Naive thymus-derived CD8-positive, alpha-beta T cell (primary cell): ENCODE measurements at regions of chr11 and their contacts with region 1.

Region 1: GRCh38 chr11:22625448-22626287 is at the start of gene FANCF:
- DNase-seq: peak; percentile 73 to 98 (median 96)
- ATAC-seq: peak; percentile 92 to 94
- H3K4me3 Mint-ChIP-seq: peak within 1 kb of the TSS; percentile 95 to 99 (median 99)
- H3K27ac Mint-ChIP-seq: peak within 1 kb of the TSS; percentile 92 to 100 (median 99)
- H3K4me1 Mint-ChIP-seq: peaks cover 17 to 50% (median 37%) of the 10 kb centered on the region in 4 donors
- H3K27me3 Mint-ChIP-seq: no peaks in the 10 kb centered on the region
- polyA plus RNA-seq, gene FANCF: 16.9 to 19.7 (median 17.0) TPM

Region 2: GRCh38 chr11:22657101-22657694 is 31.5 kb after region 1 on chr11:
- POLR2A ChIA-PET with region 1: interaction called, 10 read pairs
- DNase-seq: peak in 4 of 10 donors; percentile 31 to 60 (median 50)
- ATAC-seq: peak; percentile 62 to 97
- H3K4me3 Mint-ChIP-seq: peak overlapping the region in 9 of 10 donors; percentile 1 to 67 (median 23)
- H3K27ac Mint-ChIP-seq: peak overlapping the region; percentile 21 to 83 (median 68)
- H3K4me1 Mint-ChIP-seq: peaks cover 16 to 20% (median 18%) of the 10 kb centered on the region in 4 donors
- H3K27me3 Mint-ChIP-seq: peaks cover 0 to 4% (median 0%) of the 10 kb centered on the region in 5 donors

Region 3: GRCh38 chr11:22763166-22763565 is 137.5 kb after region 1 on chr11:
- POLR2A ChIA-PET with region 1: no interaction called
- DNase-seq: no peak
- ATAC-seq: no peak
- H3K4me3 Mint-ChIP-seq: no peak overlapping the region
- H3K27ac Mint-ChIP-seq: no peak overlapping the region
- H3K4me1 Mint-ChIP-seq: no peaks in the 10 kb centered on the region
- H3K27me3 Mint-ChIP-seq: no peaks in the 10 kb centered on the region

Region 4: DNA sequence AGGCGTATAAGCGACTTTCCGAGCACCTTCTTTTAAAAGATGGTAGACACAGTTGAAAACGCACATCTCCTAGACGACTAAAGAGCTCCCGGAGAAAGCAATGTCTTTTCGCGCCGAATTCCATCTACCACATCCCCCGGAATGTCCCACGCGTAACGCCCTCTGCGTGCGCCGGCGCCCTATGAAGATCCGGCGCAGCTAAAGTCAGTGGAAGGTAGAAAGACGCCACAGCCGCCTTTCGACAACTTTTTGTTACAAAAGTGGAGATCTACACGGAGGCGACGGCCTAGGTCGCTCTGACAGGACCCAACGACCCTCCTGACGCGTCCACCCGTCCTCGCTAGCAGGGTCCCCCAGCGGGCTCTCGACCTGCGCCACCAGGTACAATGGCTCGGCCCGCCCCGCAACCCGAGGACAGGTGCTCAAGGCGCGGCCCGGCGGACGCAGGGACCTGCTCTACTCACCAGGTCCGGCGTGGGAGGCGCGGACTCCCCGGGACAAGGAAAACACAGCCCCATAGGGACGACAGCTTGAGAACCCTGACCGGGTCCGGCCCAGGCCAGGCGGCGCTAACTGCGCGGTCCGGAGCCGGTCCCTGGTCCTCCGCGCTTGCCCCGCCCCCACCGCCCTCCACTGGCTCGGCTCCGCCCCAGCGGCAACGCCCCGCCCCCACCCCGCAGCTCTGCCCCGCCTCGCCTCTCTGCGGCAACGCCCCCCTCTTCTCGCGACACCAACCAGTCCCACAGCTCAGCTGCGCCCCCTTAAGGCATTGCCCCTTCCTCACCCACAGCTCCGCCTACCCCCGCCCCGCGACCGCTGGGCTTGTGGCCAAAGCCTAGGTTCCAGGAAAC is 203.8 kb after region 1 on chr11 and contains the start of gene SVIP:
- POLR2A ChIA-PET with region 1: interaction called, 22 read pairs
- DNase-seq: peak; percentile 86 to 96 (median 92)
- ATAC-seq: peak; percentile 88 to 89
- H3K4me3 Mint-ChIP-seq: peak within 1 kb of the TSS; percentile 88 to 97 (median 94)
- H3K27ac Mint-ChIP-seq: peak within 1 kb of the TSS; percentile 85 to 98 (median 95)
- H3K4me1 Mint-ChIP-seq: peaks cover 10 to 24% (median 17%) of the 10 kb centered on the region in 4 donors
- H3K27me3 Mint-ChIP-seq: no peaks in the 10 kb centered on the region
- polyA plus RNA-seq, gene SVIP: 43.3 to 53.2 (median 48.4) TPM